Activated T-helper 1 cell treated with anti-CD3 and anti-CD28 coated beads, Interleukin-12 subunit alpha, Interleukin-12 subunit beta, Interleukin-2, Interleukin-4 antibody, amounts not matched to agents 30 ng/mL and 10 ng/mL and 1 ng/mL, durations not matched to agents 14 hours and 24 hours and 36 hours (primary cell): ENCODE measurements at regions of chr19 and their contacts with region 1.

Region 1: GRCh38 chr19:572140-572742 is at the start of gene BSG:
- DNase-seq: peak; percentile 99
- H3K4me3 Mint-ChIP-seq: peak within 1 kb of the TSS; percentile 88
- H3K27ac Mint-ChIP-seq: peak within 1 kb of the TSS; percentile 99
- H3K4me1 Mint-ChIP-seq: peaks cover 25% of the 10 kb centered on the region
- H3K27me3 Mint-ChIP-seq: peaks cover 6% of the 10 kb centered on the region
- total RNA-seq, gene BSG: 307 and 308 TPM in 2 replicates

Region 2: DNA sequence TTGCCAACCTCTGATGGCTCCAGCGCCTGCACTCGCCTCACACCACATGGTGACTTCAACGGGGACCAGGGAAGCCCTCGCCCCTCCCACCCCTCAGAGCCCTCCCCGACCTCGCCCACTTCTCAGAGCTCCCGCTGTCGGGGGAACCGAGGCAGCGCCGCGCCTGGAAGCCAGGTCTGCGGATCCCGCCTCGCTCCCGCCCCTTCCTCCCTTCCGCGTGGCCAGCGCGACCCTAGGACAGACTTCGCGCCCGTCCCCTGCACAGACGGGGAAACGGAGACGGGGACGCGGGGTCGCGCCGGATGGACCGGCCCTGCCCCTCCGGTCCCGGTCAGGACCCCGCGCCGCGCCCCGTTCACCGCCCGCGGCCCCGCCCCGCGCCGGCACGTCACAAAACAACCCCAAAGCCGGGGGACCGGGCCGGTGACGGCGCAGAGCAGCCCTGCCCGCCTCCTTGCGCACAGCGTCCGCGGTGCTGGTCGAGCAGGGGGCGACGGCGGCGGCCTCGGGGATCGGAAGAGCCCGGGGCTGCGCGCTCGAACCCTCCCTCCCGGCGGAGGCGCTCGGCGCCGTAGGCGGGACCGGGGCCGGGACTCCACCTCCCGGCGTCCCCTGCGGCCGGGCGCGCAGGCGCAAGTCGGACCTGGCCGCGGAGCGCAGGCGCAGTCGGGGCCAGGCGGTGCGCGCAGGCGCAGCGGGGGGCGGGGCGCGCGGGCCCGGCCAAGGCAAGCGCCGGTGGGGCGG is 41.1 kb before region 1 on chr19:
- intact Hi-C with region 1: loop called (anchors 1 kb)
- DNase-seq: peak; percentile 91
- H3K4me3 Mint-ChIP-seq: peak overlapping the region; percentile 83
- H3K27ac Mint-ChIP-seq: peak overlapping the region; percentile 81
- H3K4me1 Mint-ChIP-seq: peaks cover 9% of the 10 kb centered on the region
- H3K27me3 Mint-ChIP-seq: no peaks in the 10 kb centered on the region

Region 3: DNA sequence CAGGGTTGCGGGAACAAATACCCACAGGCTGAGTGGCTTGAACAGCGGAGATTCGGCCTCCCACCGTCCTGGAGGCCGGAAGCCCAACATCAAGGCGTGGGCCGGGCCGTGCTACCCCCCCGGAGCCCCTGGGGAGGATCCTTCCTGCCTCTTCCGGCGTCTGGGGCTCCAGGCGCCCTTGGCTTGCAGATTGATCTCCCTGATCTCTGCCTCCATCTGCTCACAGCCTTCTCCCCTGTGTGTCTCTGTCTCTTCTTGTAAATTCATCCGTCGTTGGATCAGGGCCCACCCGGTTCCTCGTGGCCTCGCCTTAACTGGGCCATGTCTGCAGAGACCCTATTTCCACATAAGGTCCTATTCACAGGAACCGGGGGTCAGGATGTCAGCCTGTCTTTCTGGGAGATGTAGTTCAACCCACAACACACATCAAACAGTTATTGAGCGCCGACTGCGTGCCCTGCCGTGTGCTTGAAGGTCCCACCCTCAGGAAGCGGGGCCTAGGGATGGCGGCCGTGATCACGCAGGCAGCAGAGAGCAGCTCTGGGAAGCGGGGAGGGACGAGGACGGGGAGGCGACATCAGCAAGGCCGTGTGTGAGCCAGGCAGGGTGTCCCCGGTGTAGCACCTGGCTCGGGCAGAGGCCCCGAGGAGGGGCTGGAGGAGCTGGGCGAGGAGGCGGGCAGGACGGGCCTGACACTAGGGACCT is 38.7 kb after region 1 on chr19:
- intact Hi-C with region 1: loop called (anchors 1 kb)
- DNase-seq: peak; percentile 56
- H3K4me3 Mint-ChIP-seq: peak overlapping the region; percentile 87
- H3K27ac Mint-ChIP-seq: peak overlapping the region; percentile 98
- H3K4me1 Mint-ChIP-seq: peaks cover 14% of the 10 kb centered on the region
- H3K27me3 Mint-ChIP-seq: no peaks in the 10 kb centered on the region